Mammary epithelial cell (primary cell): ENCODE measurements at regions of chr2 and their contacts with region 1.

Region 1: GRCh38 chr2:55431982-55432627 is 12.4 kb upstream of the CCDC88A start:
- DNase-seq: peak; percentile 24
- H3K4me3 ChIP-seq: no peak overlapping the region
- H3K27ac ChIP-seq: no peak overlapping the region
- H3K4me1 ChIP-seq: no peaks in the 10 kb centered on the region
- H3K27me3 ChIP-seq: no peaks in the 10 kb centered on the region
- CTCF ChIP-seq: peak; percentile 73 to 79

Region 2: DNA sequence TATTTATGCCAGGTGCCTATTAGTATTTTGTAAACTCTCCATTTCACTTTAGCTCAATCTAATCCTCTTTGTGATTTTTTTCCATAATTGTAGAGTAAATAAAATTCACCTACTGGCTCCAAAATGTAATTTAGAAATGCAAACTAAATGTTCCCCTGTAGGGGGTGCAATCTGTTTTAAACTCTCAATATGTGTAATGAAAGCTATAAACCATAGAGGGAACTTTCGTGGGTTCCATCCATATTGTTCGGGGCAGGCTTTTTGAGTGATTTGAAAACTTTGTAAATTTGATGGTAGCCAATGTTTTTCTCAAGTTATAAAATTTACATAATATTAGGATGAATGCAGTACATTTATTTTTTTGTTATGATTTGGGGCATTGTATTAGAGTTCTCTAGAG is 1225.5 kb before region 1 on chr2:
- CTCF ChIA-PET with region 1: interaction called, 10 read pairs
- dilution Hi-C with region 1: no loop called
- in situ Hi-C with region 1: no loop called
- intact Hi-C with region 1: no loop called
- DNase-seq: peak; percentile 20
- H3K4me3 ChIP-seq: no peak overlapping the region
- H3K27ac ChIP-seq: no peak overlapping the region
- H3K4me1 ChIP-seq: peaks cover 3% of the 10 kb centered on the region
- H3K27me3 ChIP-seq: no peaks in the 10 kb centered on the region
- CTCF ChIP-seq: peak; percentile 49 to 53

Region 3: GRCh38 chr2:55063713-55064323 is 368.3 kb before region 1 on chr2:
- CTCF ChIA-PET with region 1: no interaction called
- dilution Hi-C with region 1: no loop called
- in situ Hi-C with region 1: no loop called
- intact Hi-C with region 1: no loop called
- DNase-seq: no peak
- H3K4me3 ChIP-seq: no peak overlapping the region
- H3K27ac ChIP-seq: no peak overlapping the region
- H3K4me1 ChIP-seq: no peaks in the 10 kb centered on the region
- H3K27me3 ChIP-seq: no peaks in the 10 kb centered on the region
- CTCF ChIP-seq: no peak

Region 4: DNA sequence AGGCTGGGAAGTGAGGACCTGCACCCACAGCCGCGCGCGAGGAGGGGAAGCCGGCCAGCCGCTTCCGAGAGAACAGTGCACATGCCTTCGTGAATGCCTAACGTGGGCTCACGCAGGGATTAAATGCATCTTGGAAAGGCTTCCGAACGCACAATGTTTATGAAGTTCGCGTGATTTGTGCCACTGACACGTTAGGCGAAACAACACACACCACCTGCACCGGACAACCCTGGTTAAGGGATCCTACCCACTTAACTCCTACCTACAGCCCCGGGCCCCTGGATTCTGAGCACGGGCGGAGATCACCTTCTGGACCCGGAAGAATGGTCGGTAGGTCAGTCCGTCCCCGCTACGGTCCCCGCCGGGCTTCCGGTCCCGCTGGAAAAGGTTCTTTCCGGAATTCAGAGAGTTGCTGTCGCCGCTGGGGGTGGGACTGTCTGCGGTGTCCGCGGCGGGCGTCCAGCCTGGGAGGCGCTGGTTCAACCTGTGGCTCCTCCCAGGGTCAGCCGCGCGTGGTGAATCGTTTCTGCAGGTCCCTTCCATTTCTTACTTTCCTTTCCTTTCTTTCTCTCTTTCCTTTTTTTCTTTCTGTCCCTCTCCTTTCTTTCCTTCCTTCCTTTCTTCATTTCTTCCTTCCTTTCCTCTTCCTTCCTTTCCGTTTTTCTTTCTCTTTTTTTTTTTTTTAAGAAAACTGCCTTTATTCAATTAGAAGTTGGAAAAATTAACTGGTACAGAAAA is 163.0 kb before region 1 on chr2 and contains the start of gene MTIF2:
- CTCF ChIA-PET with region 1: no interaction called
- dilution Hi-C with region 1: no loop called
- in situ Hi-C with region 1: no loop called
- intact Hi-C with region 1: loop called (anchors 1 kb)
- DNase-seq: peak; percentile 92
- H3K4me3 ChIP-seq: peak within 1 kb of the TSS; percentile 60 to 98 (median 61)
- H3K27ac ChIP-seq: peak within 1 kb of the TSS; percentile 78
- H3K4me1 ChIP-seq: peaks cover 5% of the 10 kb centered on the region
- H3K27me3 ChIP-seq: no peaks in the 10 kb centered on the region
- CTCF ChIP-seq: peak in 1 of 2 donors; percentile 18
- total RNA-seq, gene MTIF2: 24.0 to 39.5 TPM

Region 5: DNA sequence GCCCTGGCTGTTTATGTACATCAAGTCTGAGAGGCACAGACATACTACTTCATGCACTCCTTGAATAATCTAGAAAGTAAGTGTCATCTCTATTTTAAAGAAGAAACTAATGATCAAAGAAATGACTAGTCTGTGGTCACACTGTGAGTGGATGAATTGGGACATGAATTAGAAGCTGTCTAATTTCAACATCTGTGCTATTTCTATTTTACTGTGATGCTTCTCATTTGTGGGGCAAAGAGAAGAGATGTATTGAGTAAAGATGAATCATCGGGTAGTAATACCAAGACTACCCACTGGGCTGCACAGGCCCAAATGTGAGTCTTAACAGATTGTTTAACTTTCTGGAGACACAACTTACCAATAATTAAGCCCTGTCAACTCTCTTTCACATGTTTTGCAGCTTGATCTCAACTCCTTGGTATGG is 120.6 kb before region 1 on chr2:
- CTCF ChIA-PET with region 1: no interaction called
- dilution Hi-C with region 1: no loop called
- in situ Hi-C with region 1: no loop called
- intact Hi-C with region 1: loop called (anchors 1 kb)
- DNase-seq: peak; percentile 59
- H3K4me3 ChIP-seq: no peak overlapping the region
- H3K27ac ChIP-seq: no peak overlapping the region
- H3K4me1 ChIP-seq: no peaks in the 10 kb centered on the region
- H3K27me3 ChIP-seq: no peaks in the 10 kb centered on the region
- CTCF ChIP-seq: peak; percentile 44 to 50

Region 6: GRCh38 chr2:55364189-55365055 is 67.7 kb before region 1 on chr2:
- CTCF ChIA-PET with region 1: no interaction called
- dilution Hi-C with region 1: no loop called
- in situ Hi-C with region 1: no loop called
- intact Hi-C with region 1: no loop called
- DNase-seq: peak; percentile 92
- H3K4me3 ChIP-seq: peak overlapping the region in 1 of 3 experiments; percentile 12
- H3K27ac ChIP-seq: peak overlapping the region; percentile 3
- H3K4me1 ChIP-seq: peaks cover 9% of the 10 kb centered on the region
- H3K27me3 ChIP-seq: no peaks in the 10 kb centered on the region
- CTCF ChIP-seq: no peak

Region 7: GRCh38 chr2:55391155-55391554 is 41.0 kb before region 1 on chr2:
- CTCF ChIA-PET with region 1: no interaction called
- dilution Hi-C with region 1: no loop called
- in situ Hi-C with region 1: no loop called
- intact Hi-C with region 1: no loop called
- DNase-seq: no peak
- H3K4me3 ChIP-seq: no peak overlapping the region
- H3K27ac ChIP-seq: no peak overlapping the region
- H3K4me1 ChIP-seq: no peaks in the 10 kb centered on the region
- H3K27me3 ChIP-seq: no peaks in the 10 kb centered on the region
- CTCF ChIP-seq: no peak

Region 8: DNA sequence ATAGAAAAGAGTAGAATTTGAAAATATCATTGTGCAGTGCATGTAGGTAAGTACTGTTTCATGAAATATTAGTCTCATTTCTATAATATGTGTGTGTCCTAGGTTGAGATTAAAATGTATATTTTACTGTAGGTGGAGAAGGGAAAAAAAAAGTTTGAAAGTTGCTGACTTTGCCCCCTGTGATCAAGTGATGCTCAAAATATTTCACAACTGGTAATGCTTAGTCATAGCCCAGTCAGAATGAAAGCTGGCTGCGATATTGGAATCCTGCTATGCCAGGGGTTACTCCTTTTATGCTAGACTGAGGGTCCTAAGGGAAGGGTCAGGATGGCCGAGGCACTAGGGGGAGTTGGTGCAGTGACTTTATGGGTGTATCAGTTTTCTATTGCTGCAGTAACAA is 67.9 kb after region 1 on chr2:
- CTCF ChIA-PET with region 1: no interaction called
- dilution Hi-C with region 1: no loop called
- in situ Hi-C with region 1: loop called in 1 of 2 experiments (anchors 5 kb)
- intact Hi-C with region 1: no loop called
- DNase-seq: peak; percentile 45
- H3K4me3 ChIP-seq: no peak overlapping the region
- H3K27ac ChIP-seq: no peak overlapping the region
- H3K4me1 ChIP-seq: peaks cover 3% of the 10 kb centered on the region
- H3K27me3 ChIP-seq: no peaks in the 10 kb centered on the region
- CTCF ChIP-seq: no peak